ENCODE measurements at regions of chr1 and their contacts with region 1.

Region 1: GRCh38 chr1:54499360-54500106 is 48.5 kb upstream of the ACOT11 start:
- DNase-seq: no peak
- ATAC-seq: peak; percentile 81
- H3K4me3 ChIP-seq: peak overlapping the region; percentile 45 to 56
- H3K27ac ChIP-seq: peak overlapping the region; percentile 32; the same call in 1 of the 2 replicates
- H3K4me1 ChIP-seq: peaks cover 13 to 19% of the 10 kb centered on the region in 2 experiments
- H3K27me3 ChIP-seq: no peaks in the 10 kb centered on the region
- CTCF ChIP-seq: peak in 2 of 3 experiments; percentile 51 to 55; a peak in 4 of 6 replicates
- POLR2A ChIP-seq: no peak
- RAD21 ChIP-seq: peak; percentile 55

Region 2: GRCh38 chr1:54290506-54291184 is 208.9 kb before region 1 on chr1:
- CTCF ChIA-PET with region 1: no interaction called
- POLR2A ChIA-PET with region 1: no interaction called
- RAD21 ChIA-PET with region 1: no interaction called
- intact Hi-C with region 1: no loop called
- DNase-seq: no peak
- ATAC-seq: no peak
- H3K4me3 ChIP-seq: no peak overlapping the region
- H3K27ac ChIP-seq: no peak overlapping the region
- H3K4me1 ChIP-seq: peaks cover 5 to 11% of the 10 kb centered on the region in 2 experiments; a peak in 3 of 4 replicates
- H3K27me3 ChIP-seq: no peaks in the 10 kb centered on the region
- CTCF ChIP-seq: no peak
- POLR2A ChIP-seq: no peak
- RAD21 ChIP-seq: no peak

Region 3: DNA sequence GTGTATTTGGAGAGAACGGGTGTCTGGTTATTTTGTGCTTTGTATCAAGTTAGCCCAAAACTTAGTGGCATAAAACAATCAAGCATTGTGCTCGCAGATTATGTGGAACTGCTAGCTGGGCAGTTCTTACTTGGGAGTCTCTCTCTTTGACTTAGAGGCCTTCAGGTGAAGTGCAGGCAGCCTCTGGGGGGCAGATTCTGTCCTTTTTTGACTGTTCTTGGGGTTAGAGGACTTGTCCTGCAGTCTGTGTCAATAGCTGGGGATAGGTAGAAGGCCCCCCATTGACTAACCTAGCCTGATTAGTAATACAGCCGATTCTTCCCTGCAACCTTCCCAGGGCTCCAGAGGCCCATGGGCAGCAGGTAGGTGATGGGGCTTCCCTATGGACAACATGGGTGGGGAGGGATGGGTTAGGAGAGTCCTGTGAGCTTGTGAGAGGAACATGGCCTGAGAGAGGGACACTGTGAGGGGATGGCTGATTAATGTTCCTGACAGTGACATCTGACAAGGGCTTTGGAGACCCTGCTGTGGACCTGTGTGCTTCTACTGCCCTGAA is 11.3 kb after region 1 on chr1:
- CTCF ChIA-PET with region 1: interaction called, 10 read pairs
- POLR2A ChIA-PET with region 1: interaction called, 4 read pairs
- RAD21 ChIA-PET with region 1: no interaction called
- intact Hi-C with region 1: no loop called
- DNase-seq: no peak
- ATAC-seq: peak; percentile 39; the same call in 1 of the 2 replicates
- H3K4me3 ChIP-seq: no peak overlapping the region
- H3K27ac ChIP-seq: no peak overlapping the region
- H3K4me1 ChIP-seq: peaks cover 0 to 5% of the 10 kb centered on the region in 2 experiments; a peak in 1 of 4 replicates
- H3K27me3 ChIP-seq: no peaks in the 10 kb centered on the region
- CTCF ChIP-seq: 0 out of 6 replicates have a peak, but pooled peaks of 2 of the 3 experiments have one; percentile 8 to 13
- POLR2A ChIP-seq: no peak
- RAD21 ChIP-seq: peak; percentile 36; the same call in 1 of the 2 replicates

Measured in HCT116 (cell line).